Pancreas (tissue), 10 donors: ENCODE measurements at regions of chr16 and their contacts with region 1.

Region 1: GRCh38 chr16:3879887-3880564 is 487 bp downstream of the CREBBP start:
- DNase-seq: peak in 5 of 6 donors; percentile 69 to 90 (median 75)
- ATAC-seq: peak; percentile 61 to 83 (median 82)
- H3K4me3 ChIP-seq: peak overlapping the region; percentile 53 to 76 (median 70)
- H3K27ac ChIP-seq: peak overlapping the region in 3 of 4 donors; percentile 62 to 80 (median 78)
- H3K4me1 ChIP-seq: peaks cover 6 to 29% (median 18%) of the 10 kb centered on the region in 3 donors
- H3K27me3 ChIP-seq: no peaks in the 10 kb centered on the region
- CTCF ChIP-seq: no peak

Region 2: GRCh38 chr16:3690470-3690928 is 189.5 kb before region 1 on chr16:
- intact Hi-C with region 1: loop called in 1 of 3 experiments (anchors 5 kb)
- DNase-seq: peak; percentile 81 to 94 (median 92)
- ATAC-seq: peak; percentile 87 to 99 (median 96)
- H3K4me3 ChIP-seq: peak overlapping the region in 2 of 4 donors; percentile 11
- H3K27ac ChIP-seq: no peak overlapping the region
- H3K4me1 ChIP-seq: peaks cover 8 to 21% (median 19%) of the 10 kb centered on the region in 3 donors
- H3K27me3 ChIP-seq: no peaks in the 10 kb centered on the region
- CTCF ChIP-seq: peak; percentile 86 to 94 (median 92)

Region 3: GRCh38 chr16:3774156-3774767 is 105.8 kb before region 1 on chr16:
- intact Hi-C with region 1: loop called in 1 of 3 experiments (anchors 10 kb)
- DNase-seq: no peak
- ATAC-seq: peak in 2 of 4 donors; percentile 24 to 32
- H3K4me3 ChIP-seq: no peak overlapping the region
- H3K27ac ChIP-seq: no peak overlapping the region
- H3K4me1 ChIP-seq: peaks cover 0 to 10% (median 0%) of the 10 kb centered on the region in 3 donors
- H3K27me3 ChIP-seq: no peaks in the 10 kb centered on the region
- CTCF ChIP-seq: no peak

Region 4: GRCh38 chr16:3915426-3916215 is 35.6 kb after region 1 on chr16:
- intact Hi-C with region 1: no loop called
- DNase-seq: peak in 1 of 6 donors; percentile 43
- ATAC-seq: no peak
- H3K4me3 ChIP-seq: no peak overlapping the region
- H3K27ac ChIP-seq: no peak overlapping the region
- H3K4me1 ChIP-seq: no peaks in the 10 kb centered on the region
- H3K27me3 ChIP-seq: no peaks in the 10 kb centered on the region
- CTCF ChIP-seq: no peak